ENCODE measurements at regions of chr12 and their contacts with region 1.

Region 1: GRCh38 chr12:45388545-45388944 is 172.7 kb downstream of the ANO6 start:
- DNase-seq: no peak
- ATAC-seq: peak; percentile 81
- H3K4me3 Mint-ChIP-seq: no peak overlapping the region
- H3K27ac Mint-ChIP-seq: peak overlapping the region; percentile 26; the same call in 1 of the 2 replicates
- H3K4me1 Mint-ChIP-seq: peaks cover 16% of the 10 kb centered on the region
- H3K27me3 Mint-ChIP-seq: no peaks in the 10 kb centered on the region
- CTCF ChIP-seq: no peak

Region 2: GRCh38 chr12:45170456-45171042 is 218.0 kb before region 1 on chr12:
- CTCF ChIA-PET with region 1: interaction called, 26 read pairs
- POLR2A ChIA-PET with region 1: no interaction called
- DNase-seq: peak; percentile 91
- ATAC-seq: peak; percentile 90
- H3K4me3 Mint-ChIP-seq: no peak overlapping the region
- H3K27ac Mint-ChIP-seq: no peak overlapping the region
- H3K4me1 Mint-ChIP-seq: no peaks in the 10 kb centered on the region
- H3K27me3 Mint-ChIP-seq: no peaks in the 10 kb centered on the region
- CTCF ChIP-seq: peak; percentile 89

Region 3: GRCh38 chr12:45183246-45183645 is 205.3 kb before region 1 on chr12:
- CTCF ChIA-PET with region 1: interaction called, 11 read pairs
- POLR2A ChIA-PET with region 1: no interaction called
- DNase-seq: no peak
- ATAC-seq: no peak
- H3K4me3 Mint-ChIP-seq: no peak overlapping the region
- H3K27ac Mint-ChIP-seq: no peak overlapping the region
- H3K4me1 Mint-ChIP-seq: no peaks in the 10 kb centered on the region
- H3K27me3 Mint-ChIP-seq: peaks cover 3% of the 10 kb centered on the region; the same call in 1 of the 2 replicates
- CTCF ChIP-seq: no peak

Region 4: GRCh38 chr12:45268672-45269411 is 119.7 kb before region 1 on chr12:
- CTCF ChIA-PET with region 1: interaction called, 10 read pairs
- POLR2A ChIA-PET with region 1: no interaction called
- DNase-seq: no peak
- ATAC-seq: peak; percentile 73
- H3K4me3 Mint-ChIP-seq: no peak overlapping the region
- H3K27ac Mint-ChIP-seq: peak overlapping the region; percentile 88
- H3K4me1 Mint-ChIP-seq: peaks cover 30% of the 10 kb centered on the region
- H3K27me3 Mint-ChIP-seq: no peaks in the 10 kb centered on the region
- CTCF ChIP-seq: no peak